Activated T-helper 1 cell treated with anti-CD3 and anti-CD28 coated beads, Interleukin-12 subunit alpha, Interleukin-12 subunit beta, Interleukin-2, Interleukin-4 antibody, amounts not matched to agents 30 ng/mL and 10 ng/mL and 1 ng/mL, durations not matched to agents 14 hours and 24 hours and 36 hours (primary cell): ENCODE measurements at regions of chr19 and their contacts with region 1.

Region 1: DNA sequence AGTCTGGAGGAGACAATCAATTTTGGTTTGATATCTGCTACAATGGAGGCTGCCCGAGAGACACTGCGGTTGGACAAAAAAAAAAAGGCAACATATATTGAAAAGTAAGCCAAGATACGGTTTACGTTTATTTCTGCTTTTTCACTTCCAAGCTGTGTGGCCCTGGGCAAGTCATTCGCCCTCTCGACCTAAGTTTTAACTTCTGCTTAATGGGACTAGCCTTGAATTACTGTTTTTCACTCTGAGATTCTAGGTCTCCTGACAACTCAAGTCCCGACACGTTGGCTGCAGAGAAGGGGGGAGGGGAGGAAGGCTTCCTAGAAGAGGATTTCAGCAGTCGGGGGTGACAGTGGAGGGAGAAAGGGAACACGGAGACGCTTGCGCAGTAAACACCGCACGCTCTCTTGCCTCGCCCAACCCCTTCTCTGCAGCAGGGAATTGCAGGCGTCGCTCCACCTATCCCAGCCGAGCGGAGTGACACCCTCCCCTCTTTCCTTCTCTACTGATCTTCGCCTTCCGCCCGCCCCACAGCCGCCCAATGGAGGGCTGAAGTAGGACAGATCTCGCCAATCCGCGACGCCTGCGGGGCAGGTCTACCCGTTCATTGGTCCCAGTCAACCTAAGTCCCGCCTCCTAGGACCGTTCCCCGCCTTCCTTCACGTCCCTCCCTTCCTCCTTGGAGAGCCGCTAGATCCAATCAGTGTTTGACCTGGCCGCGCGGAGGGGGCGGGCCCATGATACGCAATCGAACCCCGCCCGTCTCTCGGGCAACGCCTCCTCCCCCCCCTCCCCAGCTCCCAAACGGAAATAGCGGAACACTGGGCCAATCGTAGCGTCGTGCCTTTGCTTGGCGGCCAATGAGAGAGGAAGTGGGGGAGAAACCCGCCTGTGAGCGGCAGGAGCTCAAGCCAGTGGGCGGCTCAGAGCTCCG is 529 bp upstream of the AP2A1 start:
- DNase-seq: peak; percentile 99
- H3K4me3 Mint-ChIP-seq: peak overlapping the region; percentile 89
- H3K27ac Mint-ChIP-seq: peak overlapping the region; percentile 91
- H3K4me1 Mint-ChIP-seq: peaks cover 24% of the 10 kb centered on the region
- H3K27me3 Mint-ChIP-seq: no peaks in the 10 kb centered on the region

Region 2: GRCh38 chr19:49590071-49590970 is 176.0 kb before region 1 on chr19:
- intact Hi-C with region 1: loop called (anchors 1 kb)
- DNase-seq: peak; percentile 93
- H3K4me3 Mint-ChIP-seq: peak overlapping the region; percentile 88
- H3K27ac Mint-ChIP-seq: peak overlapping the region; percentile 84
- H3K4me1 Mint-ChIP-seq: peaks cover 40% of the 10 kb centered on the region
- H3K27me3 Mint-ChIP-seq: peaks cover 10% of the 10 kb centered on the region

Region 3: DNA sequence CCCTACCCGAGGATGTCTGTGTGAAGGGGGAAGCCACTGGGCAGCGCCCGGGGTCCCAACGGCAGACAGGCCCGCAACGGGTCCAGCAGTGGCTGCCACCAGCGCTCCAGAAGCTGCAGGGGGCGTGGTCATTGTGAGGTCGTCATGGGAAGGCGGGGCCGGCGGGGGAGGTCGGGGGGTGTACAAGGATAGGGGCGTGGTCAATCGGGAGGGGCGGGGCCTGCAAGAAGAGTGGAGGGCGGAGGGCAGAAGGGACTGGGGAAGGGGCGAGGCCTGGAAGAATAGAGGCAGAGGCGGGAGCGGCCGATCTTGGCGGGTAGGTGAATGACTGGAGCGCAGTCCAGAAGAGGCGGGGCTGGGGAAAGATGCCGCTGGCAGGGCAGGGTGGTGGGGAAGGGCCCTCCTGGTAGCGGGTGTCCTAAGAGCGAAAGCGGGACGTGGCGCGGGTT is 42.5 kb after region 1 on chr19:
- intact Hi-C with region 1: loop called (anchors 1 kb)
- DNase-seq: peak; percentile 73
- H3K4me3 Mint-ChIP-seq: peak overlapping the region; percentile 85
- H3K27ac Mint-ChIP-seq: peak overlapping the region; percentile 77
- H3K4me1 Mint-ChIP-seq: peaks cover 42% of the 10 kb centered on the region
- H3K27me3 Mint-ChIP-seq: no peaks in the 10 kb centered on the region

Region 4: GRCh38 chr19:49850473-49851342 is 84.4 kb after region 1 on chr19 and contains the start of gene PTOV1:
- intact Hi-C with region 1: loop called (anchors 1 kb)
- DNase-seq: peak; percentile 88
- H3K4me3 Mint-ChIP-seq: peak within 1 kb of the TSS; percentile 89
- H3K27ac Mint-ChIP-seq: peak within 1 kb of the TSS; percentile 92
- H3K4me1 Mint-ChIP-seq: peaks cover 38% of the 10 kb centered on the region
- H3K27me3 Mint-ChIP-seq: peaks cover 5% of the 10 kb centered on the region
- total RNA-seq, gene PTOV1: 107 and 113 TPM in 2 replicates

Region 5: DNA sequence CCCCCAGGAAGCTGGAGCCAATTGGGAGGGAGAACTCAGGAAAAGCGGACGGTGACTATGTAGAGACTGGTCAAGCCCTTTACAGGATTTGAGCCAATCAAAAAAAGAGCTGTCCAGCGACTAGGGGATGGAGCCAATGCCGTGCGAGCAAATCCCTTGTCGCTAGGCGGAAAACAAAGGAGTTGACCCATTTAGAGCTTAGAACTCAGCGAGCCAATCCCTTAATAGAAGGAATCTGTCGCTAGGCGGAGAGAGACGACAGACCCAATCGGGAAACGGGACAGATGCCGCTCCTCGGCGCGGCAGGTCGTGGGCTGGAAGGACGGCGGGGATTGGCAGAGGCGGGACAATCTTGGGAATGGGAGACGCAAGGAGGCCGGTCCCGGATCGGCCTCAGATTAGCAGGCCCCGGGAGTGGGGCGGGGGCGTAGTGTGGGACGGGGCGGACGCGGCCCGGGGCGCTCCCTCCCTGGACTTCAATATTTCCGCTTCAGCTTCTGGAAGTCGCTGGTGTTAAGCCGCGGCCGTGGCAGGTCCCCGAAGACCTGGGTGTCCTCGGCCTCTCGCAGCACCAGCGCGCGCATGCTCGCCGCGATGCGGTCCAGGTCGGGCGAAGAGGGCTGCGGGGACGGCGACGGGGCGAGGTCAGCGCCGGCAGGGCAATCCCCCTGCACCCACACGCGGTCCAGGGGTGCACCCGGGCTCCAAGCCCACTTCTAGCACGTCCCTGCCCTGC is 103.3 kb after region 1 on chr19:
- intact Hi-C with region 1: loop called (anchors 1 kb)
- DNase-seq: peak; percentile 92
- H3K4me3 Mint-ChIP-seq: no peak overlapping the region
- H3K27ac Mint-ChIP-seq: no peak overlapping the region
- H3K4me1 Mint-ChIP-seq: peaks cover 36% of the 10 kb centered on the region
- H3K27me3 Mint-ChIP-seq: no peaks in the 10 kb centered on the region